ENCODE measurements at regions of chrX and their contacts with region 1.

Region 1: GRCh38 chrX:46796574-46797191 is 37.8 kb upstream of the SLC9A7 start:
- DNase-seq: no peak
- ATAC-seq: peak; percentile 80
- H3K4me3 ChIP-seq: no peak overlapping the region
- H3K27ac ChIP-seq: no peak overlapping the region
- H3K4me1 ChIP-seq: peaks cover 20% of the 10 kb centered on the region
- H3K27me3 ChIP-seq: no peaks in the 10 kb centered on the region
- CTCF ChIP-seq: peak; percentile 88 to 93 (median 90)
- EP300 ChIP-seq: no peak
- POLR2A ChIP-seq: no peak
- RAD21 ChIP-seq: peak; percentile 93

Region 2: DNA sequence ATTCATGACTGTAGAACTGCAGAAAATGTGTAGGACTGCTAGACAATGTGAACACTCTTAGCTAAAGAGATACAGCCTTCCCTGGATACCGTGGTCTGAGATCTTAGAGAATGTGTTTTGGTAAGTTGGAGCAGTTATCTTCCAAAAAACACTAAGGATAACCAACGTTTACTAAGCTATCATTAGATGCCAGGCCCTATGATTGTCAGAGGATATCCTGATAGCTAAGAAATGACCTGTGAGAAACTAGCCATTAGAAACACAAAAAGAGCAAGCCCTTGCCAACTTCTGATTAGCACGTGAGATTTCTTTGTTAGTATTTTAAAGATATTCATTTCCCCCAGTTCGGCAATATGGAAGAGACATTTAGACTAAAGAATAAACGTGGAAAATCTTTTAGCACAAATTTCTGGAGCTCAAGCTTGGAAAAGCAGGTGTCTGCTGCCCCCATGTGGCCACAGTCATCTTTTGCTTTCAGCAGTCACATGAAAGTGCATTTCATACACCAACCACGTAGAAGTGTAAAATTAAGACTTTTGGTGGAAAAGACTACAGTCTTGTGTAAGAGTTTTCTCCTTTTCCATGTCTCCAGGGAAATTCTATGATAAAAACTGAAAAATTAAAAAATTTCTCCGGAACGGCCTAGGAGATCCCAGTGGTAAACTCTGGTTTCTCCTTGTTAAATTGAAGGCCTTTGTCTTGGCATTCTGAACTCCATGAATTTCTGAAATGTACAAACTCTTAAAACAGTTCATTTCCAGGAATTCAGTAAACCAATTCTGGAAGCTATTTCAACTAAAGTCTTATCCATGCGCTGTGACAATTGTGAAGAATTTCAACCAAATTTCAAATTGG is 387.9 kb before region 1 on chrX:
- CTCF ChIA-PET with region 1: interaction called, 23 read pairs
- POLR2A ChIA-PET with region 1: no interaction called
- RAD21 ChIA-PET with region 1: interaction called, 10 read pairs
- SMC1A ChIA-PET with region 1: interaction called, 18 read pairs
- in situ Hi-C with region 1: no loop called
- intact Hi-C with region 1: no loop called
- DNase-seq: peak; percentile 16
- ATAC-seq: peak; percentile 74
- H3K4me3 ChIP-seq: no peak overlapping the region
- H3K27ac ChIP-seq: no peak overlapping the region
- H3K4me1 ChIP-seq: no peaks in the 10 kb centered on the region
- H3K27me3 ChIP-seq: no peaks in the 10 kb centered on the region; a peak in 1 of 4 replicates
- CTCF ChIP-seq: peak; percentile 85 to 86 (median 85)
- EP300 ChIP-seq: no peak
- POLR2A ChIP-seq: no peak
- RAD21 ChIP-seq: peak; percentile 86

Region 3: DNA sequence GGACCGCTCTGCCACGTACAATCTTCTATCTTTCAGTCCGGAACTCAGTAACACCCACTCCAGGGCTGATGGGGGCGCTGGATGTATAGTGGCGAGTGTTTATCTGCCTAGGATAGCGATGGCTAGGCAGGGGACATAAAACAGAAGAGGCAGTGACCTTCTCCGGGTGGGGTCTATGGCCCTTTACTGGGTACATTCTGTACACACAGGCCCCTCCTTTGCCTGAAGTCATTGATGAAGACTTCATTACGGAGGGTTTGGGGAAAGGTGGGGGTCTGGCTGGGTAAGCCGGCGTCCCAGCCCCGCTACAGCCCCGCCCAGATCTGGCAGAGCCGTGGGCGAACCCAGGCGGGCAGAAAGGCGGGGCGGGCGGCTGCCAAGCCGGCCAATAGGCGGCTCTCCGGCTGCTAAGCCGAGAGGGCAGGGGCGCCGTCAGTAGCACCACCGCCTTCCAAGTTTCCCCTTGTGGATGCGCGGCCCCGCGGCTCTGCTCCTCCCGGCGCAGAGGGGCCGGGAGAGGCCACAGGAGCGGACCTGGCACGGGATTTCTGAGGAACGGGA is 223.3 kb before region 1 on chrX and contains the start of gene CHST7:
- CTCF ChIA-PET with region 1: interaction called, 3 read pairs
- POLR2A ChIA-PET with region 1: no interaction called
- RAD21 ChIA-PET with region 1: interaction called, 13 read pairs
- SMC1A ChIA-PET with region 1: interaction called, 4 read pairs
- in situ Hi-C with region 1: no loop called
- intact Hi-C with region 1: no loop called
- DNase-seq: no peak
- ATAC-seq: peak; percentile 65
- H3K4me3 ChIP-seq: peak within 1 kb of the TSS; percentile 69
- H3K27ac ChIP-seq: peak within 1 kb of the TSS; percentile 80
- H3K4me1 ChIP-seq: peaks cover 26% of the 10 kb centered on the region
- H3K27me3 ChIP-seq: no peaks in the 10 kb centered on the region
- CTCF ChIP-seq: peak in 2 of 3 experiments; percentile 25 to 42; a peak in 3 of 6 replicates
- EP300 ChIP-seq: no peak
- POLR2A ChIP-seq: no peak
- RAD21 ChIP-seq: peak; percentile 38
- polyA plus RNA-seq, gene CHST7: 0.58 to 1.7 TPM

Region 4: GRCh38 chrX:46686003-46686645 is 110.6 kb before region 1 on chrX:
- CTCF ChIA-PET with region 1: interaction called, 23 read pairs
- POLR2A ChIA-PET with region 1: no interaction called
- RAD21 ChIA-PET with region 1: interaction called, 11 read pairs
- SMC1A ChIA-PET with region 1: interaction called, 12 read pairs
- in situ Hi-C with region 1: no loop called
- intact Hi-C with region 1: loop called (anchors 1 kb)
- DNase-seq: no peak
- ATAC-seq: peak; percentile 87
- H3K4me3 ChIP-seq: no peak overlapping the region
- H3K27ac ChIP-seq: no peak overlapping the region
- H3K4me1 ChIP-seq: peaks cover 19% of the 10 kb centered on the region
- H3K27me3 ChIP-seq: no peaks in the 10 kb centered on the region
- CTCF ChIP-seq: peak; percentile 61 to 79 (median 63)
- EP300 ChIP-seq: no peak
- POLR2A ChIP-seq: no peak
- RAD21 ChIP-seq: peak; percentile 70

Region 5: DNA sequence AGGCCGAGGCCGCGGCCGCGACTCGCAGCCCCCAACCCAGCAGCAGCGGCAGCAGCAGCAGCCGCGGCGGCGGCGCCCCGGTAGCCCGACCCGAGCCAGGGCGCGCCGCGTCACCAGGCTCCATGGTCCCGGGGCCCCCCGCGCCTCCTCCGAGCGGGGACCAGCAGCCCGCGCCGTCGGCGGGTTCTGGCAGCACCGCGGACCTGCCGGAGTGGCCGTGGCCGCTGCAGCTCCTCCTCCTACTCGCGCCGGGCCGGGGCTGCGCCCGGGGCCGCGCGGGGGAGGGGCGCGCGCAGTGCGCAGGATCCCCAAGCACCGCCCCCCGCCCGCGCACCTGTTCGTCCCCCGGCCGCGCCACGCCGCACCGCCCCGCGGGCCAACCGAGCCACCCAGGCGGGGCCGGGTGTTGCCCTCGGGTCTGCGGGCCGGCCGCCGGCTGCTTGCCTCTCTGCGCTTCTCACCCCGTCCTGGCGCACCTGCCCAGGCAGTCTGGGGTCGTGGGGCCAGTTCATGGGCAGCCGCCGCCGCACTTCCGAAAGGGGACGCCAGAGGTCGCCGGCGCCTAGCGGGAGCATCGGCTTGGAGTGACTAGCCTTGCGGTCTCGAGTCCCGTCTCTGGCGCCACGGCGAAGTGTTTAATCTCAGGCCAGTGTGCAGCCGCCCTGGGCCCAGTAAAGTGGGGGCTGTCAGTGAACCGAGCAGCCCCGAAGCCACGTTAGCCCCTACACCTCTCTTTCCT is 37.6 kb before region 1 on chrX and contains the start of gene SLC9A7:
- CTCF ChIA-PET with region 1: interaction called, 110 read pairs
- POLR2A ChIA-PET with region 1: interaction called, 5 read pairs
- RAD21 ChIA-PET with region 1: interaction called, 28 read pairs
- SMC1A ChIA-PET with region 1: interaction called, 28 read pairs
- in situ Hi-C with region 1: no loop called
- intact Hi-C with region 1: loop called (anchors 1 kb)
- DNase-seq: peak; percentile 33
- ATAC-seq: peak; percentile 72
- H3K4me3 ChIP-seq: peak within 1 kb of the TSS; percentile 69
- H3K27ac ChIP-seq: peak within 1 kb of the TSS; percentile 63
- H3K4me1 ChIP-seq: 0 out of 2 replicates have a peak, but pooled peaks cover 3% of the 10 kb centered on the region
- H3K27me3 ChIP-seq: no peaks in the 10 kb centered on the region
- CTCF ChIP-seq: peak; percentile 66 to 88 (median 84)
- EP300 ChIP-seq: no peak
- POLR2A ChIP-seq: peak; percentile 67
- RAD21 ChIP-seq: peak; percentile 78
- polyA plus RNA-seq, gene SLC9A7: 5.0 to 5.2 TPM

Measured in GM12878 (cell line).